Activated T-helper 1 cell treated with anti-CD3 and anti-CD28 coated beads, Interleukin-12 subunit alpha, Interleukin-12 subunit beta, Interleukin-2, Interleukin-4 antibody, amounts not matched to agents 30 ng/mL and 10 ng/mL and 1 ng/mL, durations not matched to agents 14 hours and 24 hours and 36 hours (primary cell): ENCODE measurements at regions of chr4 and their contacts with region 1.

Region 1: GRCh38 chr4:83455281-83456129 is at the starts of genes HELQ and MRPS18C:
- DNase-seq: peak; percentile 95
- H3K4me3 Mint-ChIP-seq: peak within 1 kb of the TSS; percentile 96
- H3K27ac Mint-ChIP-seq: peak within 1 kb of the TSS; percentile 98
- H3K4me1 Mint-ChIP-seq: peaks cover 45% of the 10 kb centered on the region
- H3K27me3 Mint-ChIP-seq: no peaks in the 10 kb centered on the region
- total RNA-seq, gene HELQ: 8.8 and 9.7 TPM in 2 replicates
- total RNA-seq, gene MRPS18C: 76.8 and 80.3 TPM in 2 replicates

Region 2: DNA sequence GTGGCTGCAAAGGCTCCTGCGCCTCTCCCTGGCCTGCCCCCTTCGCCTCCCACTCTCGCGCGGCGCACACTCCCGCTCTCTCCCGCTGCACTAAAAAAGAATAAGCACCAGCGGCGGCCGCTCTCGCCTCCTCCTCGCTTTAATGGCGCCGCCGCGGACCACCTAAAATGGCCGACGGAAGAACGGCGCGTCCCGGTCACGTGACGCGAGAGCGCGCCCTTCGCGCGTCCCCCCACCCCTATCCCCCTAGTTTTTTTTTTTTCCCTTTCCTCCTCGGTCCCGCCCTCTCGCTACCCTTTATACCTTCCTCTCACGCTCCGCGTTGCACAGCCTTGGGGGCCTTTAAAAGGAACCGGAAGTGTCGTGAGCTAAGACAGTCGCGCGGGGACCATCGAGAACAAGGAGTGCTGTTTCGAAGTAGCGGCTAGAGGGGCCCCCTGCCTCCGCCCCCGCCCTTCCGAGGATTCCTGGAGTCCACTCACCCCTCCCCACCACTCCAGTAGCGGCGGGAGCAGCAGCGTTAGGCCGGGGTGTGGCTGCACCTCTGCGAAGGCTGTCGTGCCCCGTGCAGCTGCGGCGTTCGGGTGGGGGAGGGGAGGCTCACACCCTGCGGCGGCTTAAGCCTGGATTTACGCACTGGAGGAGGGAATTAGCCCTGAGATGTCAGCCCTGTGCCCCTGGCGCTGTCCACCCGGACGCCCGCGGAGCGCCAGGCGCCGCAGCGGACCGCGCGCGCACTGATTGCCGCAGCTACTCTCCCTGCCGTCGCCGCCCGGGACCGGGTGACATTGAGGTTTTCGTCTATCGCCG is 1081.5 kb before region 1 on chr4 and contains the start of gene HNRNPD:
- intact Hi-C with region 1: loop called (anchors 1 kb)
- DNase-seq: peak; percentile 92
- H3K4me3 Mint-ChIP-seq: peak within 1 kb of the TSS; percentile 99
- H3K27ac Mint-ChIP-seq: peak within 1 kb of the TSS; percentile 100
- H3K4me1 Mint-ChIP-seq: peaks cover 37% of the 10 kb centered on the region
- H3K27me3 Mint-ChIP-seq: peaks cover 2% of the 10 kb centered on the region
- total RNA-seq, gene HNRNPD: 434 and 438 TPM in 2 replicates

Region 3: DNA sequence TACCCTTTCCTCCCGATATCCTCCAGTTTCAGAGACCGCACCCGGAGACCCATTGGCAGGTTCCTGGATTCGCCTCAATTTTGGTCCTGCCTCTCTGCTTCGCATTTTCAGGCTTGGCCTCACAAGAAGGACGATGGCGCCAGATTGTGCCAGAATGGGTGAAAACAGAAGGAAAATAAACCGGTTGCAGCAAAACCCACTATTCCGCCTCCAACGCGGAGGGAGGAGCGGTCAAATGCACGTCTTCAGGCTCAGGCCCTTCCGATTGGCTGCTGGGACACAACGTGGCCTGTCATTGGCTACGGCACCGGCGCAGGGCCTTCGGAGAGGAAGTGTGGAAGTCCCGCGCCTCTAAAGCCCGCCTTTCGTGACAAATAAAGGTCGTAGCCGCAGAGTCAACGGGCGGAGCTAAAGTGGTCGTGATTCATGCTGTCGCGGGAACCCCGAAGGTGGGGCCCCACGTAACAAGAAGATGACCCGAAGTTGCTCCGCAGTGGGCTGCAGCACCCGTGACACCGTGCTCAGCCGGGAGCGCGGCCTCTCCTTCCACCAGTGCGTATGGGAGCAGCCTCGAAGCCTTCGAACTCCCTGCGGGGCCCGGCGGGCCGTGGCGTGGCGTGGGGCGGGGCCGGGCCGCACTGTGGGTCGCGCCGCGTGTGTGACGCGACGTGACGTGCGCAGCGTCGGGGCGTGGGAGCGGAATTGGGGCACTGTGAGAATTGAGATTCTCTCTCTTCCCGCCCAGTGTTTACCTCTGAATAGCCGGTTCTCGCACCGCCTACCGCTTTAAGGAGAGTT is 555.0 kb before region 1 on chr4 and contains the start of gene THAP9:
- intact Hi-C with region 1: loop called (anchors 1 kb)
- DNase-seq: peak; percentile 98
- H3K4me3 Mint-ChIP-seq: no peak within 1 kb of the TSS
- H3K27ac Mint-ChIP-seq: no peak within 1 kb of the TSS
- H3K4me1 Mint-ChIP-seq: peaks cover 27% of the 10 kb centered on the region
- H3K27me3 Mint-ChIP-seq: peaks cover 2% of the 10 kb centered on the region
- total RNA-seq, gene THAP9: 1.9 and 2.3 TPM in 2 replicates

Region 4: DNA sequence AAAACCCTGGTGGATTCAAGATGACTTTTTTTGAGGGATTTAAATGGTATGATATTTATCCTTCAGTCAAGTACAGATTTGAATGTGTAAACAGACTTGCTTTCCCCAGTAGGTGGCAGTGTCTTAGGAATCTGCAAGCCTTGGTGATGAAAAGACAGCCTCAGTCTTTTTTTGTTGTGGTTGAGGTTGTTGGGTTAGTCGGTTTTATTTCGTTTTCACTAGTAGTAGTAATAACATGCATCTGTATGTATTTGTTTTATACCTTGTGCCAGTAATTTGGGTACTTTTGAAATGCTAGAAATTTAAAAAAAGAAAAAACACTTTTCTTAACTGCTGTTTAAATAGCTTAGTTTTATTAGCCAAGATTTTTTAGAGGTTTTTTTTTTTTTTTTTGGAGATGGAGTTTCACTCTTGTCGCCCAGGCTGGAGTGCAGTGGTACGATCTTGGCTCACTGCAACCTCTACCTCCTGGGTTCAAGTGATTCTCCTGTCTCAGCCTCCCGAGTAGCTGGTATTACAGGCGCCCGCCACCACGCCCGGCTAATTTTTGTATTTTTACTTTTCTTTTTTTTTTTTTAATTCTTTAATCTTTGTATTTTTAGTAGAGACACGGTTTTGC is 381.3 kb before region 1 on chr4:
- intact Hi-C with region 1: loop called (anchors 10 kb)
- DNase-seq: peak; percentile 66
- H3K4me3 Mint-ChIP-seq: no peak overlapping the region
- H3K27ac Mint-ChIP-seq: peak overlapping the region; percentile 19
- H3K4me1 Mint-ChIP-seq: peaks cover 29% of the 10 kb centered on the region
- H3K27me3 Mint-ChIP-seq: no peaks in the 10 kb centered on the region

Region 5: DNA sequence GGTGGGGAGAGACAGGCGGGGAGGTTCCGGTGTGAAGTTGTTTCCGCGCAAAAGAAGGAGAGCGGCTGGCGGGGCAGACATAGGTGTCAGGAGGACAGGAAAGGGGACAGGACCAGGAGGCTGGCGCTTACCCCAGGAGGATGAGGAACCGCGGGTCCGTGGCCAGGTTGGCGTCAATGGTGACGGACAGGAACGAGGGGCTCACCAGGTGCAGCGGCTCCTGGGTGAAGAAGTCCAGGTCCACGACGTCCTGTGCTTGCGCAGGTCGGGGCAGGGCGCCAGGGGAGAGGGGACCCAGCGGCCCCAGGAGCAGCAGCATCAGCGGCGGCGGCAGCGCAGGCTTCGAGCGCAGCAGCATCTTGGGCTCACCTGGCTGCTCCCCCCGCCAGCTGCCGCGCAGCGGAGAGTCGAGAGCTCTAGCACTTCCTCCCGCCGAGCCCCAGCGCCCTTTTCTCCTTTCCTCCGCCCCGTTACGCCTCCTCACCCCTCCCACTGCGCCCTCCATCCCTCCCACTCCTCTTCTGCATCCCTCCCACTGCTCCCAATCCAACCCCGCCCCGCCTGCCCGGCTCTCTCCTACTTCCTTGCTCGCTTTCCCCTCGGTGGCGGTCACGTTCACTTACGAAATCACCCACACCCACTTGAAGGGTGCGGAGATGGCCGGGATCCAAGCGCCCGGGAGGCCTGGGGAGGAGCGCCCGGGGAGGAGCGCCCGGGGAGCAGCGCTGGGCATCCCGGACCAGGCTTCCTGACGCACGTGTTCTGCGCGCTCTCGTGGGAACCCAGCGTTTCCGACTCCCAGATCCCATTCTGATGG is 120.9 kb before region 1 on chr4 and contains the start of gene HPSE:
- intact Hi-C with region 1: loop called (anchors 1 kb)
- DNase-seq: peak; percentile 67
- H3K4me3 Mint-ChIP-seq: peak within 1 kb of the TSS; percentile 84
- H3K27ac Mint-ChIP-seq: peak within 1 kb of the TSS; percentile 64
- H3K4me1 Mint-ChIP-seq: peaks cover 40% of the 10 kb centered on the region
- H3K27me3 Mint-ChIP-seq: peaks cover 17% of the 10 kb centered on the region
- total RNA-seq, gene HPSE: 23.1 and 24.1 TPM in 2 replicates